IMR-90 (cell line): ENCODE measurements at regions of chr19 and their contacts with region 1.

Region 1: DNA sequence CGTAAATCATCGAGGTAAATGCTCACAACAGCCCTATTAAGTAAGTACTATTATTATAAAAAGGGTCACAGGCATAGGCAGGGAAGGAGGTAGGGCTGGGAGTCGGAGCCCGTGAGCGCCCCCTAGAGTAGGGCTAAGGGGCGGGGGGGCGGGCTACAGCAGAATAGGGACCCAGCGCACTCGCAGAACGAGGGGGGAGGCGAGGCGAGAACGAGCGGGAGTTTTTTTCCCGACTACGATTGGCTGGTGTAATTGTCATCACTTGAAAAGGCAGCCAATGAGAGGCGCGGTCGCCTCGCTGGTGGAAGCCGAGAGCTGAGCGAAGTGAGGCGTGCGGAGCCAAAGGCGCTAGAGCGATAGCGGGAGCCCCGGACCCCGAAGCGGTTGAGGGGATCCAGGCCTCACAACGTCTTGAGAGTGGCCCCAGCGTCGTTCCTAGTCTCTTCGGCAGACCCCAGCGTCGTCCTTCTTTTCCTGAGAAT is 24.2 kb downstream of the KEAP1 start:
- DNase-seq: peak; percentile 82
- ATAC-seq: peak; percentile 96
- H3K4me3 ChIP-seq: peak overlapping the region; percentile 36
- H3K27ac ChIP-seq: no peak overlapping the region
- H3K4me1 ChIP-seq: peaks cover 3% of the 10 kb centered on the region
- H3K27me3 ChIP-seq: no peaks in the 10 kb centered on the region
- CTCF ChIP-seq: peak; percentile 49
- POLR2A ChIP-seq: no peak
- RAD21 ChIP-seq: 0 out of 2 replicates have a peak, but pooled peaks have one; percentile 13

Region 2: DNA sequence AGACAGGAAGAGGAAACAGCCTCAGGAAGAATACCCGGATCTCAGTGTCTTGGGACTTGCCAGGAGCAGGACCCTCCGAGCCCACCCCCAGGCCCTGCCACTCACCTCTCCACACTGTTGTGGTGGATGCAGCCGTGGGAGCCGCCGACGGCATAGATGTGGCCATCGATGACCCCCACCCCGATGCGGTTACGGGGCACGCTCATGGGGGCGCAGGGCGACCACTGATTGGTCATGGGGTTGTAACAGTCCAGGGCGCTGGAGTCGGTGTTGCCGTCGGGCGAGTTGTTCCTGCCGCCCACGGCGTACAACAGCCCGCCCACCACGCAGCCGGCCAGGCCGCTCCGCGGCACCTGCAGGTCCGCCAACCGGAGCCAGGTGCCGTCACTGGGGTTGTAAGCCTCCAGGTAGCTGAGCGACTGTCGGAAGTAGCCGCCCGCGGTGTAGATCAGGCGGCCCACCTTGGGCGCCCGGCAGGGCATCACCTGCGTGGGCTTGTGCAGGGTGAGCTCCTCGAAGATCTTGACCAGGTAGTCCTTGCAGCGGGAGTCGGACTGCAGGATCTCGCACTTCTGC is 12.6 kb after region 1 on chr19:
- CTCF ChIA-PET with region 1: interaction called, 4 read pairs
- POLR2A ChIA-PET with region 1: interaction called, 10 read pairs
- dilution Hi-C with region 1: no loop called
- in situ Hi-C with region 1: no loop called
- intact Hi-C with region 1: no loop called
- DNase-seq: no peak
- ATAC-seq: no peak
- H3K4me3 ChIP-seq: no peak overlapping the region
- H3K27ac ChIP-seq: no peak overlapping the region
- H3K4me1 ChIP-seq: no peaks in the 10 kb centered on the region
- H3K27me3 ChIP-seq: no peaks in the 10 kb centered on the region
- CTCF ChIP-seq: no peak
- POLR2A ChIP-seq: no peak
- RAD21 ChIP-seq: no peak